Caco-2 (cell line): ENCODE measurements at regions of chr11 and their contacts with region 1.

Region 1: DNA sequence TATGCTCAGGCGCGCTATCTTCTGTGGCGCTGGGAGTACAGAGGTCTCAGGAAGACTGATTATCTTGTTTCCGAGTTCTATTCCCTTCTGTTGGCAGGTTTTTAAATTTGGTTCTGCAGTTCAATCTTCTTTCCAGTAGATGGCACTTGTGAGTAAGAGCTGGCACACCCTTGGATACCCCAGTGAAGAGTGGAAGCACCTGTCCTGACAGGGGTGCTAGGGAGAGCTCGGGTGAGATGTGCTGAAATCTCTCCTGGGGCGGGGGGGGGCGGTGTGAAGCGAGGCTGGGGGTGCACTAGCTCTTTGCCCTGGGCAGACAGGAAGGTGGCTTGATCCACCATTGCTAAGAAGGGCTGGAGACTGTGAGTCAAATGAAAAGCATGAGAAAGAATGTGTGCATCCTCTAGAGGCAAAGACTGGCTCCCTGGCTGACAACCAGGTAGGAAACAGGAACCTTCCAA is 679.9 kb upstream of the CCDC179 start:
- DNase-seq: peak; percentile 27 to 67
- H3K4me3 ChIP-seq: no peak overlapping the region
- H3K4me3 Mint-ChIP-seq: no peak overlapping the region
- H3K27ac Mint-ChIP-seq: no peak overlapping the region
- H3K4me1 ChIP-seq: no peaks in the 10 kb centered on the region
- H3K4me1 Mint-ChIP-seq: no peaks in the 10 kb centered on the region
- H3K27me3 ChIP-seq: no peaks in the 10 kb centered on the region
- H3K27me3 Mint-ChIP-seq: no peaks in the 10 kb centered on the region
- CTCF ChIP-seq: peak; percentile 72 to 85

Region 2: GRCh38 chr11:22875869-22876473 is 664.2 kb before region 1 on chr11:
- CTCF ChIA-PET with region 1: interaction called, 4 read pairs
- POLR2A ChIA-PET with region 1: no interaction called
- intact Hi-C with region 1: loop called (anchors 5 kb)
- DNase-seq: peak; percentile 60 to 75
- H3K4me3 ChIP-seq: no peak overlapping the region
- H3K4me3 Mint-ChIP-seq: no peak overlapping the region
- H3K27ac Mint-ChIP-seq: no peak overlapping the region
- H3K4me1 ChIP-seq: no peaks in the 10 kb centered on the region
- H3K4me1 Mint-ChIP-seq: peaks cover 6% of the 10 kb centered on the region
- H3K27me3 ChIP-seq: no peaks in the 10 kb centered on the region
- H3K27me3 Mint-ChIP-seq: no peaks in the 10 kb centered on the region
- CTCF ChIP-seq: peak; percentile 62 to 83

Region 3: DNA sequence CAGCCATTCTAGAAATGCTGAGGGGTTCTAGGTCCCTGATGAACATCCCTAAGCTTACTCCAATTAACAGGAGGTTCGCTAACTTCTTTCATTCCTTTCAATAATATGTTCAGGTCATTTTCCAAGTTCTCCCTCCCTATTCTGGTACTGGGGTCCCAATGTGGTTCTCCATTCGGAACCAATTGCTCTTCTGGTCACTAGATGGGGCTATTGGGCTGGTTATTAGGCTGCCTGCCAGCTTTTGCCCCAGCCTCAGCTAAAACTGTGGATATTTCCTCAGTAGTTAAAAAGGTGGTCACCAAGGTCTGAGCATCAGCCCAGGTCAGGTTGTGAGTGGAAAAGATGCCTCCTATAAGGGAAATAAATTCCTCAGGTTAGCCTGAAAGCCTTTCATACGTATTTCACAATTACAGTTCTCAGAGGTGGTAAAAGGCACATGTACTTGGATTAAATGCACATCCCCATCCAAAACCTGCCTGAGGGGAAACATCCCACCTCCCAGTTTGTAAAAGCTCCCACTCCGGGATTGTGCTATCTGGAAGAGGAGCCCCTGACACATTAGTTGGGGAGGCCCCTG is 518.8 kb before region 1 on chr11:
- CTCF ChIA-PET with region 1: no interaction called
- POLR2A ChIA-PET with region 1: no interaction called
- intact Hi-C with region 1: loop called (anchors 1 kb)
- DNase-seq: peak in 1 of 2 experiments; percentile 42
- H3K4me3 ChIP-seq: no peak overlapping the region
- H3K4me3 Mint-ChIP-seq: no peak overlapping the region
- H3K27ac Mint-ChIP-seq: no peak overlapping the region
- H3K4me1 ChIP-seq: no peaks in the 10 kb centered on the region
- H3K4me1 Mint-ChIP-seq: no peaks in the 10 kb centered on the region
- H3K27me3 ChIP-seq: no peaks in the 10 kb centered on the region
- H3K27me3 Mint-ChIP-seq: no peaks in the 10 kb centered on the region
- CTCF ChIP-seq: peak; percentile 74 to 85

Region 4: GRCh38 chr11:23836981-23837380 is 296.9 kb after region 1 on chr11:
- CTCF ChIA-PET with region 1: no interaction called
- POLR2A ChIA-PET with region 1: no interaction called
- intact Hi-C with region 1: loop called (anchors 10 kb)
- DNase-seq: no peak
- H3K4me3 ChIP-seq: no peak overlapping the region
- H3K4me3 Mint-ChIP-seq: no peak overlapping the region
- H3K27ac Mint-ChIP-seq: no peak overlapping the region
- H3K4me1 ChIP-seq: no peaks in the 10 kb centered on the region
- H3K4me1 Mint-ChIP-seq: peaks cover 10% of the 10 kb centered on the region
- H3K27me3 ChIP-seq: no peaks in the 10 kb centered on the region
- H3K27me3 Mint-ChIP-seq: no peaks in the 10 kb centered on the region
- CTCF ChIP-seq: no peak

Region 5: DNA sequence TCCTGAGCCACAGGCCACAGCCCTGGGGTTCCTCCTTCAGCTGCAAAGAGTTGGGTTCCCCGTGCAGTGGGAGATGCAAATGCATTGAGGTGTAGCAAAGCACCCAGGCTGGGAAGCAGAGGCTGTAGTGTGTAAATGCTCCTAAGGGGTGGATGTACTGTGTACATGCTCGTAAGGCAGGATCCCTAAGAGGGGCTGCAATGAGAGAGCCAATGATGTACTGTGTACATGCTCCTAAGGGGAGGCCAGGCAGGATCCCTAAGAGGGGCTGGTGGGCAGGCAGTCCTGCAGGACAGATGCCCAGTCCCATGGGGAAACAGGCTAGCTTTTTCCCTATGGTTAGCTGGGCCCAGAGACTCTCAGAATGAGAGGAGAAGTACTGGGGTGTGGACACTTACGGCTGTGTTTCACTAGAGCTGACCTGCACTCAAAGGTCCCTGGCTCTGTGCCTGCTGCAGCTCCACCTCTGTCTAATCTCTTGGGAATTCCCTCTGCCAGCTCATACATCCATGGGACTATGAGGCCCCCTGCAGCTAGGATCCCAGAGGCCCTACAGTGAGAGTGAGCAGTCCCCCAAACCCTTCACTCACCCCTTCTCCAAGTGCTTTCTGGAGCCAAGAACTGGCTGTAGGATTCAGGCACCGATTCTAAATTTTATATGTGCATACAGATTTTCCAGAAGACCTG is 694.8 kb after region 1 on chr11:
- CTCF ChIA-PET with region 1: interaction called, 7 read pairs
- POLR2A ChIA-PET with region 1: no interaction called
- intact Hi-C with region 1: loop called (anchors 1 kb)
- DNase-seq: peak; percentile 36 to 52
- H3K4me3 ChIP-seq: no peak overlapping the region
- H3K4me3 Mint-ChIP-seq: no peak overlapping the region
- H3K27ac Mint-ChIP-seq: no peak overlapping the region
- H3K4me1 ChIP-seq: no peaks in the 10 kb centered on the region
- H3K4me1 Mint-ChIP-seq: peaks cover under 1% of the 10 kb centered on the region
- H3K27me3 ChIP-seq: no peaks in the 10 kb centered on the region
- H3K27me3 Mint-ChIP-seq: no peaks in the 10 kb centered on the region
- CTCF ChIP-seq: peak in 1 of 2 experiments; percentile 34

Region 6: DNA sequence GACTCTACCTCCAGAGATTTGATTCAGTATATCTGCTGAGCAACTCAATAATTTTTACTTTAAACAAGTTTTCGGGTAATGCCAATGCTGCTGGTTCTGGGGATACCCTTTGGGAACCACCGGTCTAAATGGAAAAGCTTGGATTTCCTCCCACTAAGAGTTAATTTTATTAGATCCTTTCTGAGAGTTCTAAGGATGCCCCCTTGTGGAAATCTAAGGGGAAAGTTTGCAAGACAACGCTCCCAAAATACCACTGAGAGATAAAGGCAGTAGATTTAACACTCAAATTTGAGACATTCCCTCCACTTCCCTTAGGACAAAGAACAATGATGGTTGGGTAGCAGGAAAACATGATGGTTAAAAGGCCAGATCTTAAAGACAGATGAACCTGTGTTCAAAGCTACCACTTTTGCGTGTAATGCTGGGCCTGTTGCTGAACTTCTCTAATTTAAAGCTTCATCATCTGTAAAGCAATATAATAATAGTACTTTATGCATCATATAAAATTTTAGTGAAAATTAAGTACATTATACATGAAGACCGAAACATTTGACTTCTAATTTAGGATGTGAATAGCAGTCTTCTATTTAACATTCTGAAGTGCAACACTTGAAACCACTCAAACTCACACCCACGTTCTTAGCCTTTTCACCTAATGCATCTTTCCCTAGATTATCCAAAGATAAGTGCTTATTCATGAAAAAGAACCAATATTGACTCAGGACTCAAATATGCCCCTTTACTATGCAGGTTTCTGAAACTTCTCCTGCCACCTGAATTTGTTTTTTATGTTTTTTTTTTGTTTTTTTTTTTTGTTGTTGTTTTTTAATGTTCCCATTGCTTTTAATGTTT is 846.6 kb after region 1 on chr11:
- CTCF ChIA-PET with region 1: interaction called, 4 read pairs
- POLR2A ChIA-PET with region 1: no interaction called
- intact Hi-C with region 1: loop called (anchors 1 kb)
- DNase-seq: peak in 1 of 2 experiments; percentile 17
- H3K4me3 ChIP-seq: no peak overlapping the region
- H3K4me3 Mint-ChIP-seq: no peak overlapping the region
- H3K27ac Mint-ChIP-seq: no peak overlapping the region
- H3K4me1 ChIP-seq: no peaks in the 10 kb centered on the region
- H3K4me1 Mint-ChIP-seq: no peaks in the 10 kb centered on the region
- H3K27me3 ChIP-seq: no peaks in the 10 kb centered on the region
- H3K27me3 Mint-ChIP-seq: peaks cover 2% of the 10 kb centered on the region
- CTCF ChIP-seq: peak; percentile 45 to 55